Uterus (tissue), 4 donors: ENCODE measurements at regions of chr2 and their contacts with region 1.

Region 1: GRCh38 chr2:9984217-9984739 is 32.8 kb downstream of the GRHL1 start:
- DNase-seq: no peak
- H3K4me3 ChIP-seq: no peak overlapping the region
- H3K27ac ChIP-seq: peak overlapping the region; percentile 48 to 49
- H3K4me1 ChIP-seq: no peaks in the 10 kb centered on the region
- H3K27me3 ChIP-seq: no peaks in the 10 kb centered on the region
- CTCF ChIP-seq: peak; percentile 79 to 87 (median 84)
- POLR2A ChIP-seq: no peak

Region 2: DNA sequence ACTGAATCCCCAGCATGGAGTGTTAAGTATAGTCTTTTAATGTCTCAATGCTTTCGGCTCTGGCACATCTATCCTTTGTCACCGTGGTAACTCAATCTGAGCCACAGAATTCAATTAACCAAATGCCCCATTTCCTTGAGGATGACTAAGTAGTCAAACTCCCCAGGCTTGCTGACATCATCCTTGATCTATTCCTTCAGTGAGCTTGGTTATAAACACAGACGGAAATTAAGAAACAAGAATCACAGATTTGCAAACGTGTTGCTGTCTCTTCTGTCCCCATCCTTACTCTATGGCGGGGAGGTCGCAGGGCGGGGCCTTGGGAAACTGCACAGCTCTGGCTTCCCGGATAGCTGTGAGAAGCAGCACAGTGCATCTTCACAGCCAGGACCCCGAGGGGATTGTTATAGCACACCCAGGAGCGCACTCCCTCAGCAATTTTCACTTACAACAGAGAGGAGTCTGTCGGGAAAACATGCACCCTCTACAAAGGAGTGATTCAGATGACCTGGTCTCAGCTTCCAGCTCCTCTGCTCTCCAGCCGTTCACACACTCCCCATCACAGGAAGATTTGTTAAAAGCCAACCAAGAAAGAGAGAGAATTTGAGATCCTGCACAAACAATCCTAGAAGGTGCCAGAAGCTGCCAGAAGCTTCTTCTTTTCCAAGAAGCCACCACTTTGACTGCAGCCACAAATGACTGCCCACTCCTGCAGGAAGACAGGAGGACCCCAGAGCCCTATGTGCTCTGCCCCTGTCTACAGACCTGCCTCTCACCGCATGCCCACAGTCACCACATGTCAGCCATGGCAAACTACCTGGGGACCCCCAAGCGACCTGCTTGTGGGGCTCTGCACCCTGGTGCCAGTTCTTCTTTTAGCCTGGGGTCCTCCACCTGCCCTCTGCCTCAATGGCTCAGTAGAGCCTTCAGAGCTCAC is 308.6 kb before region 1 on chr2:
- intact Hi-C with region 1: no loop called
- DNase-seq: no peak
- H3K4me3 ChIP-seq: no peak overlapping the region
- H3K27ac ChIP-seq: peak overlapping the region in 1 of 2 donors; percentile 25
- H3K4me1 ChIP-seq: no peaks in the 10 kb centered on the region
- H3K27me3 ChIP-seq: no peaks in the 10 kb centered on the region
- CTCF ChIP-seq: no peak
- POLR2A ChIP-seq: no peak

Region 3: GRCh38 chr2:9941196-9941995 is 42.9 kb before region 1 on chr2:
- intact Hi-C with region 1: no loop called
- DNase-seq: no peak
- H3K4me3 ChIP-seq: no peak overlapping the region
- H3K27ac ChIP-seq: no peak overlapping the region
- H3K4me1 ChIP-seq: no peaks in the 10 kb centered on the region
- H3K27me3 ChIP-seq: no peaks in the 10 kb centered on the region
- CTCF ChIP-seq: no peak
- POLR2A ChIP-seq: no peak

Region 4: DNA sequence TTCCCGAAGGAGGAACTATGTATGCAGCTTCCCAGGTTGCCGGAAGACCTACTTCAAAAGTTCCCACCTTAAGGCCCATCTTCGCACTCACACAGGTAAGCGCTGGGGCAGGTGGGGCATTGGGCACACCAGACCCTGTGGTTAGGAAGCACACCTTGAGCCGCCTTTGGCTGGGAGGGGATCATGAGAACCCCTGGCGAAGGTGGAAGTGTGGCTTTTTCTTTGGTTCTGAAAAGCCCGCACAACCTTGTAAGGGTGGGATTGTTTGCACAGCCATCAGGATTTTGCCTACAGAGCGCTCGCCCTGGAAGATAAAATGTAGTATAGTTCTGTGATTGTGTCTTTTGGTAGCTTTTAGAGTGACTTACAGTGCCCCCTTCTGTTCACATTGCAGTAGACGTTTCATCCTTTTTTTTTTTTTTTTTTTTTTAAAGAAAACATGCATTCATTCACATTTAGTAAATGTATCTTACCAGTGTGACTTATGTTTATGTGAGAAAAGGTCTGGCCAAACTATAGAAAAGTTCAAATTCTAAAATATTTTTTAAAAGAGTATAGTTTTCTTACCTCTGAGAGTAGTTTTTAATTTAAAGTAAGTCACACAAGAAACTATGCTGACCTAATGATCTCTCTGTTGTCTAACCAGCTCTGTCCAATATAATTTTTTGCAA is 64.4 kb after region 1 on chr2:
- intact Hi-C with region 1: loop called (anchors 5 kb)
- DNase-seq: no peak
- H3K4me3 ChIP-seq: no peak overlapping the region
- H3K27ac ChIP-seq: peak overlapping the region in 1 of 2 donors; percentile 35
- H3K4me1 ChIP-seq: peaks cover 3 to 7% of the 10 kb centered on the region in 2 donors
- H3K27me3 ChIP-seq: no peaks in the 10 kb centered on the region
- CTCF ChIP-seq: peak; percentile 59 to 64 (median 62)
- POLR2A ChIP-seq: no peak

Region 5: DNA sequence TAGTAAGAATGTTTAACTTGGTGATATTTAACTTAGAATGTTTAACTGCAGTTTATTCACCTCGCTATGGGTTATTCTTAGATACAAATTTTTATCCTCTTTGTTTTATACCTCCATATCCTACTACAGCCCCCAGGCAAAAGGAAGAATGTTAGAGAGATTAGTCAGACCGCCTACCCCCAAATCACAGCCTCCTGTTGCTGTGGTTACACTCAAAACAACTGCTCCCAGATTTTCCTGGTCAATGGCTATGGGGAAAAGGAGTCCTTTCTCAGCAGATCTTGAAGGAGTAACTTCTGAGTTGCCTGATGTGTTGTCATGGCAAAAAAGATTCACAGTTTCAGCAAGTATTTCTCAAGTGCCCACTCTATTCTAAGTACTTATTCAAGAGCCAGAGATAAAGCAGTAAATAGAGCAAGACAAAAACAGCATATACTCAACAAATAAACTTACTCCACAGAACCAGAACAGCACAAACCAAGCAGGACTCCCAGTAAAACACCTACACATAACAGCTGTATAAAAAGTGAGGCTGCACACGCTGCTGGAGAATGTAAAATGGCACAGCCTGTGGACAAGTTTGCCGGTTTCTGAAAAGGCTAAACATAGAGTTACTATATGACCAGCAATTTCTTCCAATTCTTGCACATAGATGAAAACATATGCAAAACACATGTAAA is 600.7 kb after region 1 on chr2:
- intact Hi-C with region 1: no loop called
- DNase-seq: no peak
- H3K4me3 ChIP-seq: no peak overlapping the region
- H3K27ac ChIP-seq: no peak overlapping the region
- H3K4me1 ChIP-seq: no peaks in the 10 kb centered on the region
- H3K27me3 ChIP-seq: no peaks in the 10 kb centered on the region
- CTCF ChIP-seq: no peak
- POLR2A ChIP-seq: no peak